ENCODE measurements at regions of chr11 and their contacts with region 1.

Region 1: DNA sequence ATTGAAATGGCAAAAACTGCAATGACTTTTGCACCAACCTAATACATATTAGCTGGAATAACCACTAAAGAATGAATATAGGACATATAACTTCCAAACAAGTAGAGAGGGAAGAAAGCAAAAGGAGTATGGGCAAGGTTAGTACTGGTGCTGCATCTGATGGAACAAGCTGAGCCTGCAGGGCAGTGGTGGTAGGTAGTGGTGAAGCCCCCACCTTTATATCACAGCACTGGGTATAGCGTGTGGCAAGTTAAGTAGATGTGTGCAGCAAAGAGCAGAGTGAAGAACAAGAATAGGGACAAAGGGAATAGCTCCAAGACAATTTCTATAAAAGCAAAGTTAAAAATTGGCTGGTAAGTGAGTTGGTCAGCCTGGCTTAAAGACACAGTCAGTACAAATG is 62.3 kb downstream of the CTNND1 start:
- DNase-seq: no peak
- ATAC-seq: peak; percentile 35; the same call in 1 of the 2 replicates
- H3K4me3 ChIP-seq: no peak overlapping the region
- H3K27ac ChIP-seq: no peak overlapping the region
- H3K4me1 ChIP-seq: no peaks in the 10 kb centered on the region
- H3K27me3 ChIP-seq: no peaks in the 10 kb centered on the region
- CTCF ChIP-seq: no peak
- POLR2A ChIP-seq: no peak
- RAD21 ChIP-seq: no peak

Region 2: DNA sequence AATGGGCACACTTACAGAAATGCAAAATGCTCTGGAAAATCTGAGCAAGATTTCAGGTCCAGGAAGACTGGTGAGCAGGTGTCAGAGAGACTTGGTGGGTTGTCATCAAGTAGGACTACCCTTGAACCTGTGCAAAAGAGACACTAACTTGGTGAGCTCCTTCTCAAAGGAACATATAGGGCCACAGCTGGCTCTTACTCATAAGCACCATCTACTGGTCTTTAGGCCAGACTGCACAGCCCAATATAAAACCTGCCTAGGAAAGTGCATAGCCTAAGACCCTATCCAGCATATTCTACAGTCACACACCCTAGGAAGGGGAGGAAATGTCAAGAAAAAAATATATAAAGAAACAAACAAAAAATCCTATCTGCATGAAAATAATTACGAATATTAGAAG is 462.4 kb after region 1 on chr11:
- CTCF ChIA-PET with region 1: no interaction called
- POLR2A ChIA-PET with region 1: no interaction called
- RAD21 ChIA-PET with region 1: no interaction called
- intact Hi-C with region 1: loop called (anchors 10 kb)
- DNase-seq: peak; percentile 23
- ATAC-seq: peak; percentile 94
- H3K4me3 ChIP-seq: no peak overlapping the region
- H3K27ac ChIP-seq: no peak overlapping the region
- H3K4me1 ChIP-seq: no peaks in the 10 kb centered on the region
- H3K27me3 ChIP-seq: no peaks in the 10 kb centered on the region
- CTCF ChIP-seq: peak; percentile 24 to 79 (median 67); a peak in 5 of 6 replicates
- POLR2A ChIP-seq: no peak
- RAD21 ChIP-seq: peak; percentile 61

Region 3: GRCh38 chr11:58719406-58720117 is 895.7 kb after region 1 on chr11:
- CTCF ChIA-PET with region 1: no interaction called
- POLR2A ChIA-PET with region 1: no interaction called
- RAD21 ChIA-PET with region 1: no interaction called
- intact Hi-C with region 1: no loop called
- DNase-seq: no peak
- ATAC-seq: no peak
- H3K4me3 ChIP-seq: no peak overlapping the region
- H3K27ac ChIP-seq: no peak overlapping the region
- H3K4me1 ChIP-seq: no peaks in the 10 kb centered on the region
- H3K27me3 ChIP-seq: no peaks in the 10 kb centered on the region
- CTCF ChIP-seq: no peak
- POLR2A ChIP-seq: no peak
- RAD21 ChIP-seq: no peak